Motor neuron (in vitro differentiated cells): ENCODE measurements at regions of chr11 and their contacts with region 1.

Region 1: GRCh38 chr11:122215244-122215992 is 99.4 kb upstream of the BLID start:
- ATAC-seq: peak; percentile 90 to 95 (median 92)
- H3K4me3 ChIP-seq: no peak overlapping the region
- H3K27ac ChIP-seq: no peak overlapping the region
- H3K4me1 ChIP-seq: peaks cover 5 to 12% of the 10 kb centered on the region in 2 donors

Region 2: DNA sequence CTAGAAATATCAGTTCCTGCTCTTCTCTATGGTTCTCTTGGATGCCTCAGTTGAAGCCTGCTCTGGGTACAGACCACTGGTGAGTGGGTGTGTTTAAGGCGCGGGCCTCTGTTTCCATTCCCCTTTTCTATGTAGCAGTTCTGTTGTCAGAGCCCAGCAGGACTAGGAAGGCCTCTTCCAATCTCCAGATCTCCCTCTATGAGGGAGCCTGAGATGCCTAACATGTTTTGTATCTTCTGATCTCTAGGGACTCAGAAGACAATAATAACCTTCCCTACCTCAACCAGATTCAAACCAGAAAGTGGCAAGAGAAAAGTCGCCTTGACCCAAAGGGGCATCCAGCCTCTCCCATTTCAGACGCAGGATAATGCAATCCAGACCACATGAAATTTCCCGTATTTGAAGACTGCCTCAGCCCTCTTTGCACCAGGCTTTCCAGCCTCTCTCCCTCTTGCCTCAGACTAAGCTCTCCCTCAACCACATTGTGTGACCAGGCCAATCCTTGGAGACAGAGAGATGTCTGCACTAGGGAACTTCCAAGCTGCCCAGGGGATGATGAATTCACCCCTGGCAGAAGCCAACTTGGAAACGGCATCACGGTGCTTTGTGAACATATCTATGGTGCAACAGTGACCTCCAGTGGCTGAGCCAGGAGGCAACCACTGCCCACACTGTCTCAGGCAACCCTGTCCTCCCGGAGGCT is 290.0 kb after region 1 on chr11:
- in situ Hi-C with region 1: loop called in 6 of 9 experiments (anchors 10 to 25 kb)
- ATAC-seq: peak; percentile 100
- H3K4me3 ChIP-seq: no peak overlapping the region
- H3K27ac ChIP-seq: no peak overlapping the region
- H3K4me1 ChIP-seq: peaks cover 5 to 15% of the 10 kb centered on the region in 2 donors